ENCODE measurements at regions of chr5 and their contacts with region 1.

Region 1: GRCh38 chr5:139574641-139575312 is 13.6 kb downstream of the UBE2D2 start:
- DNase-seq: peak; percentile 49
- ATAC-seq: peak; percentile 35
- H3K4me3 Mint-ChIP-seq: no peak overlapping the region
- H3K27ac Mint-ChIP-seq: peak overlapping the region; percentile 26
- H3K4me1 Mint-ChIP-seq: peaks cover 73% of the 10 kb centered on the region
- H3K27me3 Mint-ChIP-seq: no peaks in the 10 kb centered on the region

Region 2: GRCh38 chr5:139560752-139561654 is 13.8 kb before region 1 on chr5 and contains the start of gene UBE2D2:
- CTCF ChIA-PET with region 1: interaction called, 70 read pairs
- POLR2A ChIA-PET with region 1: interaction called, 26 read pairs
- DNase-seq: peak; percentile 98
- ATAC-seq: peak; percentile 90
- H3K4me3 Mint-ChIP-seq: peak within 1 kb of the TSS; percentile 91
- H3K27ac Mint-ChIP-seq: peak within 1 kb of the TSS; percentile 91
- H3K4me1 Mint-ChIP-seq: peaks cover 36% of the 10 kb centered on the region
- H3K27me3 Mint-ChIP-seq: no peaks in the 10 kb centered on the region
- total RNA-seq, gene UBE2D2: 227 to 232 TPM

Region 3: DNA sequence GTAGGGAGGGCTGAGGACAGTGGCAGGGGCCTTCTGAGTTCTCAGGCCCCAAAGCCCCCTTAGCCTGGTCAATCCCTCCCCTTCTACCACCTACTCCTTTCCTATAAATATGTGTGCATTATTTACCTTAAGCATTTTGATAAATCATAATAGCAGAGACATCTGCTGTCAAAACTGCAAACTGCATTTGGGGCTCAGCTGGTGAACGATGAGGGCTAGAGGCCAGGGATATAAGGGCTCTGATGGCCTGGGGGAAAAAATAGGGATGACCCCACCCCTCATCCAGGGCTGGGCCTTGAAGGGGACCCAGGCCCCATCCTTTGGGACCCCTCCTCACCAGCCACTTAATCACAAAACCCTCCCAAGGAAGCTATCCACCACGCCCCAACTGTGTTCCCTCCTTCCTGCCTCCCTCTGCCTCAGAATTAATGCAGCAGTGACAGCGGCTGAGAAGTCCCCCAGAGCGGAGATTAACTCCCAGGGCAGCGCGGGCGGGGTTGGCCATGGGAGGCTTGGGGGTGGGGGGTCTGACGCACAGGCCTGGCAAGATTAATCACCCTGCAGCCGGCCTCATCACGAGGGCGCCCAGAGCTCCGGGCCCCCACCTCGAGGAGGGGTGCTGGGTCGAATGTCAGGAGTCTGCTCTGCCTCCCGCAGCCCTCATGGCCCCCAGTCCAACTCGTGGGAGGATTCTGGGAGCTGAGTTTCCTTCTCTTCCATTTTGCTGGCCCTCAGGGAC is 115.5 kb after region 1 on chr5:
- CTCF ChIA-PET with region 1: interaction called, 13 read pairs
- POLR2A ChIA-PET with region 1: no interaction called
- DNase-seq: peak; percentile 48
- ATAC-seq: no peak
- H3K4me3 Mint-ChIP-seq: no peak overlapping the region
- H3K27ac Mint-ChIP-seq: no peak overlapping the region
- H3K4me1 Mint-ChIP-seq: peaks cover 6% of the 10 kb centered on the region
- H3K27me3 Mint-ChIP-seq: no peaks in the 10 kb centered on the region